IMR-90 (cell line): ENCODE measurements at regions of chr9 and their contacts with region 1.

Region 1: GRCh38 chr9:128688512-128689292 is at the start of gene SET:
- DNase-seq: peak; percentile 90
- ATAC-seq: peak; percentile 90
- H3K4me3 ChIP-seq: peak within 1 kb of the TSS; percentile 99
- H3K27ac ChIP-seq: peak within 1 kb of the TSS; percentile 99
- H3K4me1 ChIP-seq: peaks cover 14% of the 10 kb centered on the region
- H3K27me3 ChIP-seq: no peaks in the 10 kb centered on the region
- CTCF ChIP-seq: no peak
- POLR2A ChIP-seq: no peak
- RAD21 ChIP-seq: no peak
- total RNA-seq, gene SET: 182 and 587 TPM in 2 replicates

Region 2: DNA sequence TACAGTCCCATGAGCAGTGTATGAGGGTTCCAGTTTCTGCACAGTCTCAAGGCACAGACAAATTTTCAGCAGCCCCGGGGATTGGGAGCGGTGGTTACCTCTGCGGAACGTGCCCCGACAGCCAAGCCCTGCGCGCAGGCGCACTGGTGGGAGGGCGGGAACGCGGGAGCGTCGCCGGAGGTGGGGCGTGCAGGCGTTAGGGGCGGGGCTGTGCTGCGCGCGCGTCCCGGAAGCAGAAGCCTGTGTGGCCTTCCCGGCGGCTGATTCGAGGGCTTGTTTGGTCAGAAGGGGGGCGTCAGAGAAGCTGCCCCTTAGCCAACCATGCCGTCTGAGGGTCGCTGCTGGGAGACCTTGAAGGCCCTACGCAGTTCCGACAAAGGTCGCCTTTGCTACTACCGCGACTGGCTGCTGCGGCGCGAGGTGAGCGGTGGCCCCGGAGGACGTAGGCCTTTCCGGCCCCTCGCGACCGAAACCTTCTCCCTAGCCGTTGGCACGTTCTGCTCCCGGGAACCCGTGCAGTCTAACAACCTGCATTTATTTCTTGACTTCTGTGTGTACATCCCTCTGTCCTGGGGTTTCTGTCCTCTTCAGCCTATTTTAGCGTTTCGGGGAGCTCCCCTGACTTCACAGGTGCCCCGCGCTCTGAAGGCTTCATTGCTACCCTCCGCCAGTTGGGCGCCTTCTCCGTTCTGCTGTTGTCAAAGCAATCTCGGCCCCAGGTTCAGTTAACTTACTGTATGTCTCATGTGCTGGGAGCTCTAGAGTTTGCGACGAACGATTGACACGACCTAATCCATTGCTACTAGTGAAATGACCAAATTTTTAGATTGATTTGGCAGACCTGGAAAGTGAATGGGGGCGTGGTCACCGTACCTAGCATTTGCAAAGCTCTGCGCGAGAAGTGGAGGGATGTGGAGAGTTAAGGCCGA is 184.0 kb before region 1 on chr9 and contains the start of gene GLE1:
- CTCF ChIA-PET with region 1: no interaction called
- POLR2A ChIA-PET with region 1: interaction called, 19 read pairs
- dilution Hi-C with region 1: no loop called
- in situ Hi-C with region 1: no loop called
- intact Hi-C with region 1: no loop called
- DNase-seq: peak; percentile 86
- ATAC-seq: peak; percentile 98
- H3K4me3 ChIP-seq: peak within 1 kb of the TSS; percentile 84
- H3K27ac ChIP-seq: peak within 1 kb of the TSS; percentile 68
- H3K4me1 ChIP-seq: peaks cover 4% of the 10 kb centered on the region
- H3K27me3 ChIP-seq: no peaks in the 10 kb centered on the region
- CTCF ChIP-seq: no peak
- POLR2A ChIP-seq: peak; percentile 75
- RAD21 ChIP-seq: no peak
- total RNA-seq, gene GLE1: 35.3 and 39.4 TPM in 2 replicates

Region 3: GRCh38 chr9:128575469-128575868 is 113.2 kb before region 1 on chr9:
- CTCF ChIA-PET with region 1: no interaction called
- POLR2A ChIA-PET with region 1: no interaction called
- dilution Hi-C with region 1: no loop called
- in situ Hi-C with region 1: no loop called
- intact Hi-C with region 1: loop called (anchors 10 kb)
- DNase-seq: no peak
- ATAC-seq: no peak
- H3K4me3 ChIP-seq: no peak overlapping the region
- H3K27ac ChIP-seq: no peak overlapping the region
- H3K4me1 ChIP-seq: no peaks in the 10 kb centered on the region
- H3K27me3 ChIP-seq: no peaks in the 10 kb centered on the region
- CTCF ChIP-seq: no peak
- POLR2A ChIP-seq: no peak
- RAD21 ChIP-seq: no peak

Region 4: DNA sequence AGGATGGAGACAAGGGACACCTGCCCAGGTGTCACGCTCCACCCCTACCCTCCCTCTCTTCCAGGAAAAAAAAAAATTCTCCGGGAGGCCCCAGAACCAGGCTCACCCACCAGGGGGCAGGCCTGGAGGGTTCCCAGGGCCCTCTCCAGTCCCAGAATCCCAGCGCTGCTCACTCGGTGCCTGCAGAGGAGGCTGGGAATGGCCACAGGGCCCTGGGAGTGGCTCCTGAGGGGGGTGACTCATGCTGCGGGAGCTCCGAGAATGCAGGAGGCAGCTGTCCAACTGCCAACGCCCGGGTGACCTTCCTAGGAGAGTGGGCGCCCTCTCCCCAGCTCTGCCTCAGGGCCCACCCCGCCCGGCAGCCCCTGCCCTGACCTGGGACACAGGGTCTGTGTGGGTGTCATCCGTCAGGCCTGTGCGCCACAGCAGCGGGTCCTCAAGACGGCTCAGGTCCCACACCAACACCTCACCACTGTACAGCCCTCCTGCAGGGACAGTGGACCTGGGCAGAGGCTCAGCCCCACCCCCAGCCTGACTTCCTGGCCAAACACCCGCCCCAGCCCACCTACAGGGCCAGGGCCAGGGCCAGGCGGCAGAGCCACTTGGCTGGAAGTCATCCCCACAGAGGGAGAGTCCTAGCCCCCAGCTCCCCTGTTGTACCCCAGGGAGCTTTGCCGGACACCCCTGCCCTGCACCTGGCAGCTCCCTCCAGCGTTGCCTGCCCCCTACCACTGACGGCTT is 53.2 kb before region 1 on chr9:
- CTCF ChIA-PET with region 1: interaction called, 3 read pairs
- POLR2A ChIA-PET with region 1: interaction called, 5 read pairs
- dilution Hi-C with region 1: no loop called
- in situ Hi-C with region 1: no loop called
- intact Hi-C with region 1: loop called (anchors 1 kb)
- DNase-seq: peak; percentile 94
- ATAC-seq: peak; percentile 92
- H3K4me3 ChIP-seq: no peak overlapping the region
- H3K27ac ChIP-seq: peak overlapping the region; percentile 98
- H3K4me1 ChIP-seq: peaks cover 13% of the 10 kb centered on the region
- H3K27me3 ChIP-seq: no peaks in the 10 kb centered on the region
- CTCF ChIP-seq: peak; percentile 90
- POLR2A ChIP-seq: no peak
- RAD21 ChIP-seq: peak; percentile 82

Region 5: GRCh38 chr9:128656416-128657343 is 32.0 kb before region 1 on chr9 and contains the start of gene DYNC2I2:
- CTCF ChIA-PET with region 1: no interaction called
- POLR2A ChIA-PET with region 1: no interaction called
- dilution Hi-C with region 1: no loop called
- in situ Hi-C with region 1: no loop called
- intact Hi-C with region 1: loop called (anchors 2 kb)
- DNase-seq: peak; percentile 90
- ATAC-seq: peak; percentile 98
- H3K4me3 ChIP-seq: peak within 1 kb of the TSS; percentile 61
- H3K27ac ChIP-seq: peak within 1 kb of the TSS; percentile 98
- H3K4me1 ChIP-seq: no peaks in the 10 kb centered on the region
- H3K27me3 ChIP-seq: no peaks in the 10 kb centered on the region
- CTCF ChIP-seq: no peak
- POLR2A ChIP-seq: peak; percentile 74; the same call in 1 of the 2 replicates
- RAD21 ChIP-seq: 0 out of 2 replicates have a peak, but pooled peaks have one; percentile 6
- total RNA-seq, gene DYNC2I2: 36.1 and 37.1 TPM in 2 replicates

Region 6: DNA sequence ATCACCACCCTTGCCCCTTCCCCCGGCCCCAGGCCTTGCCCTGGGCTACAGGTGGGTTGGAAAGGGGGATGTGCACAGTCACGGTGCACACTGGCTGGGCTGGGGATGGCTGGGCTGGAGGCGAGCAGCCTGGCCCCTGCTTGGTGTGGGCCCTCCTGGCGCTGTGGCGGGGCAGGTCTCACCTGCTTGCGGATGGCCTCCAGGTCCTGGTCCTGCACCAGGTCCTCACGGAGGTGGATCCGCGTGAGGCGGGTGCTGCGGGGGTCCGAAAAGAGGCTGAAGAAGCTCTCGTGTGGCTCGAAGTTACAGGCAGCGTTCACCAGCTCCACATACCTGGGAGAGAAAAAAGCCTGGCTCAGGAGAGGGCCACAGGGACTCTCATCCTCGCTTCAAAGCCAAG is 64.9 kb after region 1 on chr9:
- CTCF ChIA-PET with region 1: no interaction called
- POLR2A ChIA-PET with region 1: no interaction called
- dilution Hi-C with region 1: no loop called
- in situ Hi-C with region 1: no loop called
- intact Hi-C with region 1: no loop called
- DNase-seq: no peak
- ATAC-seq: no peak
- H3K4me3 ChIP-seq: no peak overlapping the region
- H3K27ac ChIP-seq: no peak overlapping the region
- H3K4me1 ChIP-seq: no peaks in the 10 kb centered on the region
- H3K27me3 ChIP-seq: no peaks in the 10 kb centered on the region
- CTCF ChIP-seq: no peak
- POLR2A ChIP-seq: no peak
- RAD21 ChIP-seq: no peak

Region 7: DNA sequence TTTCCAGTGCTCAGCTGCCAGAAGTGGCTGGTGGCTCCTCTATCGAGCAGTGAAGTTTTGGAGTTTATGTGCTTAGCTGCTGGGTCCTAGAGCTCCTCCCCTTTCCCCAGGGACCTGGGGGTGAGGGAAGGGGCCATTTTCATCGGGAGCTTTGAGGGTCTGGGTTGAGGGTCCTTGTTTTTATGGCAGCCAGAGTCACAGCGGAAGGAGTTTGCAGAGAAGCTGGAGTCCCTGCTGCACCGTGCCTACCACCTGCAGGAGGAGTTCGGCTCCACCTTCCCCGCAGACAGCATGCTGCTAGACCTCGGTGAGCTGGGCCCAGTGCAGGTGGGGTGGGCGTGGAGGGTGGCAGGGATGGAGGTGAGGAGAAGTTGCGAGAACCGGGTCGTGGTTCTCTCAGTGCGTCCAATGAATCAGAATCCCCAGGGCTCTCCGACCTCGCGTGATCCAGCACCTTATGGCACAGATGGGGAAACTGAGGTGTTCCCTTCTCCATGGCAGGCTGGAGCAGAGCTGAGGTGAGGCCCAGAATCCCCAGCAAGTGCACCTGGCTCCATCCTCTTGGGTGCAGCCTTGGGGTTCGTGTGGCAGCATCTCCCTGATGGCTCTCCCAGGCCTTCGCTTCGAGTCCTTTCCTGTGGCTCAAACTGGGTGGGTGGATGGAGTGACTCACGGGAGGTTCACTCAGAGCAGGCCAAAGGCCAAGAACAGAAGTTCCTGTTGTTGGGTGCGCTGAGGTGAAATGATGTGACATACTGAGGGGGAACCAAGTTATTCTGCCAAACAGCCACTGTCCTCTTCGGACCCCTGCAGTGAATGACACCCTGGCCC is 370.5 kb after region 1 on chr9:
- CTCF ChIA-PET with region 1: no interaction called
- POLR2A ChIA-PET with region 1: no interaction called
- dilution Hi-C with region 1: no loop called
- in situ Hi-C with region 1: no loop called
- intact Hi-C with region 1: no loop called
- DNase-seq: peak; percentile 42
- ATAC-seq: peak; percentile 46
- H3K4me3 ChIP-seq: no peak overlapping the region
- H3K27ac ChIP-seq: no peak overlapping the region
- H3K4me1 ChIP-seq: no peaks in the 10 kb centered on the region
- H3K27me3 ChIP-seq: no peaks in the 10 kb centered on the region
- CTCF ChIP-seq: no peak
- POLR2A ChIP-seq: no peak
- RAD21 ChIP-seq: no peak